Heart right ventricle (tissue), 16 donors: ENCODE measurements at regions of chr1 and their contacts with region 1.

Region 1: GRCh38 chr1:71196685-71197084 is 115.8 kb upstream of the ZRANB2 start:
- DNase-seq: no peak
- ATAC-seq: no peak
- H3K4me3 ChIP-seq: no peak overlapping the region
- H3K27ac ChIP-seq: no peak overlapping the region
- H3K4me1 ChIP-seq: peaks cover 0 to 6% (median 0%) of the 10 kb centered on the region in 9 donors
- H3K27me3 ChIP-seq: no peaks in the 10 kb centered on the region
- CTCF ChIP-seq: peak in 8 of 9 donors; percentile 29 to 65 (median 42)

Region 2: GRCh38 chr1:71135571-71135970 is 61.1 kb before region 1 on chr1:
- intact Hi-C with region 1: no loop called
- DNase-seq: no peak
- ATAC-seq: no peak
- H3K4me3 ChIP-seq: no peak overlapping the region
- H3K27ac ChIP-seq: no peak overlapping the region
- H3K4me1 ChIP-seq: no peaks in the 10 kb centered on the region
- H3K27me3 ChIP-seq: no peaks in the 10 kb centered on the region
- CTCF ChIP-seq: no peak

Region 3: GRCh38 chr1:71228742-71229365 is 32.2 kb after region 1 on chr1:
- intact Hi-C with region 1: no loop called
- DNase-seq: no peak
- ATAC-seq: peak in 3 of 8 donors; percentile 49 to 68 (median 50)
- H3K4me3 ChIP-seq: no peak overlapping the region
- H3K27ac ChIP-seq: no peak overlapping the region
- H3K4me1 ChIP-seq: peaks cover 0 to 4% (median 0%) of the 10 kb centered on the region in 9 donors
- H3K27me3 ChIP-seq: peaks cover 0 to 3% (median 0%) of the 10 kb centered on the region in 7 donors
- CTCF ChIP-seq: no peak

Region 4: GRCh38 chr1:71687361-71687760 is 490.7 kb after region 1 on chr1:
- intact Hi-C with region 1: no loop called
- DNase-seq: no peak
- ATAC-seq: no peak
- H3K4me3 ChIP-seq: no peak overlapping the region
- H3K27ac ChIP-seq: no peak overlapping the region
- H3K4me1 ChIP-seq: no peaks in the 10 kb centered on the region
- H3K27me3 ChIP-seq: no peaks in the 10 kb centered on the region
- CTCF ChIP-seq: no peak

Region 5: DNA sequence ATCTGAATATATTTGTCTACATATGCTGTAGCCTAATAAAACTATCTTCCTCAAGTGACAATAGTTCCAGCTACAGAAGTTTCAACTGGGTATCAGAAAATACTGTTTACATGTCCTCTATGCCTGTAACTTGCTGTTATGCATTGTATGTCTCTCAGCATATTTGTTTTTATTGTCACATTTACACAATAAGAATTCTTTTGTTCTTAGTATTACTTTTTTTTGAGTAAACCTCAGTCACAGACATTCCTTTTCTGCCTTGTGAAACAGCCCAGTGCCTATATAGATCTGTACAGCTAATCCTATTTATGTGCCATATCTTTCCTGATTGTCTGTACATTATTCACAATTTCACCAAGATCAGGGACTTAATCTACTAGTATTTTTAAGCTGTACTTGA is 520.5 kb after region 1 on chr1:
- intact Hi-C with region 1: loop called in 1 of 10 experiments (anchors 10 kb)
- DNase-seq: no peak
- ATAC-seq: no peak
- H3K4me3 ChIP-seq: no peak overlapping the region
- H3K27ac ChIP-seq: no peak overlapping the region
- H3K4me1 ChIP-seq: no peaks in the 10 kb centered on the region
- H3K27me3 ChIP-seq: no peaks in the 10 kb centered on the region
- CTCF ChIP-seq: no peak